Posterior cingulate gyrus (tissue), 11 donors: ENCODE measurements at regions of chr11 and their contacts with region 1.

Region 1: GRCh38 chr11:69101115-69101791 is 52.5 kb downstream of the TPCN2 start:
- DNase-seq: peak; percentile 36 to 96 (median 70)

Region 2: GRCh38 chr11:68962527-68963250 is 138.6 kb before region 1 on chr11:
- intact Hi-C with region 1: no loop called
- DNase-seq: peak in 3 of 10 donors; percentile 10 to 60 (median 53)

Region 3: GRCh38 chr11:69115586-69116560 is 14.6 kb after region 1 on chr11:
- intact Hi-C with region 1: no loop called
- DNase-seq: peak in 4 of 10 donors; percentile 22 to 73 (median 60)

Region 4: DNA sequence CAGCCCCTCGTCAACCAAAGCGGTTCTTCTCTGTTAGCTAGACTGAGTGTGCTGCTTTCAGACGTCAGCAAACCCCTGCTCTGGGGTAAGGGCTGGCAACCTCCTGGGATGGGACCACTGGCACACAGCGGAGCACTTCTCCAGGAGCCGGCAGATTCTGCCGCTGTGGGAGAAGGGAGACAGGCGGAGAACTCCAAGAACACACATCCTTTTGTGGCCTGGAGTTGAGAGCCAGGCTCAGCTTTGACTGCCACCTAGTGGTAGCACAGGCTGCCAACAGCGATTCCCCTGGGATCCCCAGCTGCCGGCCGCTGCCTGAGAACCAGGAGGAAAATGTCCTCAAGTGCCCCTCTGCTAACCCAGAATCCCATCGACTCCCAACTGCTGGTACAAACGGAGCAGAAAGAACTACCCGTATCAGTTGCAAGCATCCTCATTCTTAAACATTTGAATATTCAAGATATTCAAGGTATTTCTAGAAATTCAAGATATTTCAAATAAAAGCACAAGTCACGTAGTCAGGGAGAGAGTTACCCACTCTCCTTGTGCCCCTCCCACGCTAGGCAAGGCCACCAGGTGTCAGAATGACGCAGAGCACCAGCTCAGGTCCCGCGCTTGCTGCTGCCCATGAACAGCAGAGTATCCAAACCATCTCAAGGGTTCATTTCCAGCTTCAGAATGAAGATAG is 569.0 kb after region 1 on chr11:
- intact Hi-C with region 1: loop called (anchors 1 kb)
- DNase-seq: peak; percentile 83 to 98 (median 89)